BJ (cell line): ENCODE measurements at regions of chr1 and their contacts with region 1.

Region 1: DNA sequence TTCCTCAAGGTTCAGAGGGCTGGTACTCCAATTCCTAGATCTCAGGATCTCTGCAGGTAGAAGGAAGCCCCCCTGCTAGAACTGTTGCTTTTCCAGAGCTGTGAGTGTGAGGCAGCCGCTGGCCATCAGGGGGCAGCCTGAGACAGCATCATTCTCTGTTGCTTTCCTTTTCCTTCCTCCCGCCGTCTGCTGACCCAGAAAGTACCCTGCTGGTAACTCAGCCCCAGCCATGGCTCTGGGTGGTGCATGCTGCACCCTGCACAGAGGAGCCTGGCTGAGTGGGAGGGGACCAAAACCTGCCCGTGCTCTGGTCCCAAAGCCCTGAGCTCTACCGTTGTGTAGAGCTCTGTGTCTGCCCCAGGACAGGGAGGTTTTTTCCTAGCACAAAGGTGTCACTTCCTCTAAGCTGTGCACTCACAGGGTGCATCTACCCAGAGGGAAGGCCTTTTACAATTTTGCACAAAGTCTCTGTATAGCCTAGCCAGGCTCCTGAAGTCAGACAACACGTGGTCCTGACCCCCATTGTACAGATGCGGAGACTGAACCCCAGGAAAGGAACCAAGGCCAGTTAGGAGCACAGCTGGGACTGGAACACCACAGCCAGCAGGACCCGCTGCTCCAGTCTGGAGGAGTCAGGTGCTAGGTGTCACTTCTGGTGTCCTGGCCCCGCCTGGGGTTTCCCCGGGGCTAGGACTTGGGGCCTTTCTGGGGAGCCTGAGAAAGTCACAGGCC is 5.6 kb upstream of the FAM131C start:
- DNase-seq: no peak
- H3K4me3 ChIP-seq: no peak overlapping the region
- H3K27me3 ChIP-seq: no peaks in the 10 kb centered on the region
- CTCF ChIP-seq: peak; percentile 95

Region 2: DNA sequence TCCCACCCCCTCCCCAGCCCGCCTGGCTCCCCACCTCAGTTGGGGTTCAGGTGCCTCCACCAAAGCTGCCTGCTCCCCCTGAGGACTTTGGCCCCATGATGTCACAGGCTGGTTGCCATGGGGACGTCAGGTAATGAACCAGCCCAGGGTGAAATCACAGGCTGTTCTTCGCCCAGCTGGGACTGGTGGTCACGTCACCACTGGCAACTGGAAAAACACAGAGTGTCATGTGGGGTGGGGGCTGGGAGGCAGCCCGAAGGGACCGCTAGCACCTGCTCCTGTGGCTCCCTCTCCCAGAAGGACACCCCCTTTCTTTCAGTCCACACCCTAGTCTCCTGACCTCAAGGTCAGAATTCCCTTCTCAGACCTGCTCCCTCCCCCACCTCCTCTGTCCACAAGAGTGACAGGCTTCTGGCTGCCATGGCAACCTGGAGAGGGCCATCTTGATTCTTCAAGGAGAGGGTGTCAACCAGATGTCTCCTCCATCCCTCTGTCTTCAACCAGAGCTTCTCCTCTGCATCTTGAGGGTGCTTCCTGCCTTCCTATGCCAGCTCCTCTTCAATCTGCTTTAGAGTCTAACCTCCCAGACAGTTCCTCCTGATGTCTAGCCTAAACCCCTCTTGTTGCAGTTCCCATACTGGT is 11.8 kb before region 1 on chr1:
- CTCF ChIA-PET with region 1: interaction called, 24 read pairs
- POLR2A ChIA-PET with region 1: no interaction called
- DNase-seq: no peak
- H3K4me3 ChIP-seq: no peak overlapping the region
- H3K27me3 ChIP-seq: 0 out of 2 replicates have a peak, but pooled peaks cover 2% of the 10 kb centered on the region
- CTCF ChIP-seq: no peak

Region 3: DNA sequence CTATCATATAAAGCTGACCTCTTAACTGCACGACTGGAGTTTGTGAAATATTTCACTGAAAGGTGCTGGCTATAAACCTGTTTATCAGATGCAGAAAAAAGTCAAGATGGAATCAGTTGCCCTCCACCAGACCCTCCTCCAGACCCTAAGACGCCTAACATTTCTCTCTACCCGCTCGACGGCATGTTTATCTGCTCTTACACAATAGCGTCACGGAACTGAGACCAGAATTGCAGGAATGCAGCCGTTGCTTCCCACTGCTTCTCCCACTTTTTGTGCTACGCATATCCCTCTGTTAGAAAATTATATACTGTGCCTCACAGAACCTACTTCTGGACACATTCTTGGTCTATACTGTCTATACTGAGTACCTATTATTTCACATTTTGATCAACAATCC is 22.5 kb after region 1 on chr1:
- CTCF ChIA-PET with region 1: interaction called, 10 read pairs
- POLR2A ChIA-PET with region 1: no interaction called
- DNase-seq: no peak
- H3K4me3 ChIP-seq: no peak overlapping the region
- H3K27me3 ChIP-seq: no peaks in the 10 kb centered on the region; the same call in 1 of the 2 replicates
- CTCF ChIP-seq: no peak

Region 4: GRCh38 chr1:16141573-16142336 is 62.7 kb after region 1 on chr1:
- CTCF ChIA-PET with region 1: interaction called, 179 read pairs
- POLR2A ChIA-PET with region 1: no interaction called
- DNase-seq: no peak
- H3K4me3 ChIP-seq: no peak overlapping the region
- H3K27me3 ChIP-seq: no peaks in the 10 kb centered on the region
- CTCF ChIP-seq: no peak

Region 5: DNA sequence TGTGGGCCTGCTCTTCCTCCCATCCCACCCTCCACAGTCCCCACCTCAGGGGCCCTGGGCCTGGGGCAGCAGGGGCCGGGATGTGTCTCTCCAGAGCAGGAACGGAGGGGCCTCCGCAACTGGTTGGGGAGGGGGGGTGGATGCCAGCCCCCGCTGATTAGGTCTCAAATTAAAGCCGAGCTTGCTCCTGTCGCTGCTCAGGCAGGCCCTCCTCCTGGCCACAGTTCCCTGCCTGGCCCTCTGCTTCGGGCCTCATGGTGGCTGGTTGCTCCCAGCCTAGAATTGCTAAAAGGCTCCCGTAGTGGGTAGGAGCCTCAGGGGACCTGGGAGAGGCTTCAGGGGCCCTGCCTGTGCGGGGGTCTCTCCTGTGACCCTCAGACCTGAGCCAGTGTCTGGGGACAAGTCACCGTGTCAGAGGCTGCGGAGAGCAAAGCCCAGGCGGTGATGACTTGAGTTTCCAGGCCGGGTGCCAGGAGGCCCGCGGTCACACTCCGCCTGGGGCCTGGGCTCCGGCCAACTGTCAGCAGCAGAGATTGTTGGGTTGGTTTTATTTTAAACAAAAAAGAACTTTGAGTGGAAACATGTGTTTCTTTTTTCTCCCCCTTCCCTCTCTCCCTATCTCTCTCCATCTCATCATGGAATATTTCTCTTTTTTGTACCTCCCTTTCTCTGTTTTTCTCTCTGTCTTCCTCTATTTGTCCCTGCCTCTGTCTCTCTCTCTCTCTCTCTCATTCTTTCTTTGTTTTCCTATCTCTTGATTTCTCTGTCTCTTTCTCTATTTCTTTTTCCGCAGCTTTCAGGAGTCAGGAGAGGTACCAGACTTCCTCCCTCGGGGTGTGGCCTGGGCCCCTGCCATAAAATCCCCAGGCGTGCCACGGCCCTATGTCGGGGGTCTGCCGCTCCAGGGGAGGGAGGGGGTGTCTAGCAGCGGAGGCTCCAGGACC is 96.8 kb after region 1 on chr1:
- CTCF ChIA-PET with region 1: interaction called, 584 read pairs
- POLR2A ChIA-PET with region 1: no interaction called
- DNase-seq: peak; percentile 65
- H3K4me3 ChIP-seq: no peak overlapping the region
- H3K27me3 ChIP-seq: no peaks in the 10 kb centered on the region
- CTCF ChIP-seq: no peak

Region 6: DNA sequence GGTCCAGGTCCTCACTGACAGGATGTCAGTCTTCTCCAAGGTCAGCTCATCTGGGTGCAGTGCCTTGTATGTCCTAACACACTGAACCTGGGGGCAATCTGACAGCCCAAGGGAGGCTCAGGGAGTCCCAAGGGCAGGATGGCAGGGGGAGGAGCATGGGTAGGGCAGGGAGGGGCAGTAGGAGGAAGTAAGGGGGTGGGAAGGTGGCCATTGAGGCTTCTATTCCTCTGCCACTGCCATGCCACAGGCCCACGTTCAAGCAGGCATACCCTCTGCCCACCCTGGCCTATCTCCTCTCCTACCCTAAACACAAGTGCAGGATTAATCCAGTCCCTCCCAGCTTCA is 120.0 kb after region 1 on chr1:
- CTCF ChIA-PET with region 1: interaction called, 584 read pairs
- POLR2A ChIA-PET with region 1: no interaction called
- DNase-seq: no peak
- H3K4me3 ChIP-seq: no peak overlapping the region
- H3K27me3 ChIP-seq: no peaks in the 10 kb centered on the region
- CTCF ChIP-seq: no peak

Region 7: DNA sequence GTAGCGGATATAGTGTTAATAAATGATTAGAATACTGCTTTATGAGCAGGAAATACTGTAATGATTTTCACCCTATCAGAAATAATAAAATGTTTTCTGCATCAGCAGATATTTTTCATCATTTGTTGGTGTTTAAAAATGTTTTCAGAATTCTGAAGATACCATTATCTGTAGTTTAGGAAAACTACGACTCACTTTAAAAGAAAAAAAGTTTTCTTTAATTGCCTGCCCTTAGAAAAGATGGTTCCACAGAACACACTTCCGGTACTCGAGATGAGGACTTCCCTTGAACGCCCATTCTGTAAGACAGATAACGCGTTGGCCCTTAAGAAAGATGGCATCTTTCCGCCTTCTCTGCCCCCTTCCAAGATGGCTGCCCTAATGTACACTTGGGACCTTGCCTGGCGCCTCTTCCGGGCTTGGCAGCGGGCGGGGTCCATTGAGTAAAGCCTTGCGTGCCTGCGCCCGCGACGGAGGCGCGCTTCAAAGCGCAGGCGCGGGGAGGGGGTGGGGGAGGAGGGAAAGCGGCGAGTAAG is 287.7 kb after region 1 on chr1 and contains the start of gene SZRD1:
- CTCF ChIA-PET with region 1: interaction called, 63 read pairs
- POLR2A ChIA-PET with region 1: interaction called, 4 read pairs
- DNase-seq: peak; percentile 98
- H3K4me3 ChIP-seq: peak within 1 kb of the TSS; percentile 86
- H3K27me3 ChIP-seq: no peaks in the 10 kb centered on the region
- CTCF ChIP-seq: no peak
- polyA plus RNA-seq, gene SZRD1: 94.9 and 125 TPM in 2 replicates